WTC11 (cell line): ENCODE measurements at regions of chr2 and their contacts with region 1.

Region 1: GRCh38 chr2:56077352-56077915 is 106.4 kb upstream of the CCDC85A start:
- DNase-seq: peak; percentile 63
- ATAC-seq: peak; percentile 80
- H3K4me3 Mint-ChIP-seq: no peak overlapping the region
- H3K27ac Mint-ChIP-seq: no peak overlapping the region
- H3K4me1 Mint-ChIP-seq: no peaks in the 10 kb centered on the region
- H3K27me3 Mint-ChIP-seq: no peaks in the 10 kb centered on the region; the same call in 1 of the 2 replicates
- CTCF ChIP-seq: peak; percentile 28; the same call in 1 of the 2 replicates

Region 2: DNA sequence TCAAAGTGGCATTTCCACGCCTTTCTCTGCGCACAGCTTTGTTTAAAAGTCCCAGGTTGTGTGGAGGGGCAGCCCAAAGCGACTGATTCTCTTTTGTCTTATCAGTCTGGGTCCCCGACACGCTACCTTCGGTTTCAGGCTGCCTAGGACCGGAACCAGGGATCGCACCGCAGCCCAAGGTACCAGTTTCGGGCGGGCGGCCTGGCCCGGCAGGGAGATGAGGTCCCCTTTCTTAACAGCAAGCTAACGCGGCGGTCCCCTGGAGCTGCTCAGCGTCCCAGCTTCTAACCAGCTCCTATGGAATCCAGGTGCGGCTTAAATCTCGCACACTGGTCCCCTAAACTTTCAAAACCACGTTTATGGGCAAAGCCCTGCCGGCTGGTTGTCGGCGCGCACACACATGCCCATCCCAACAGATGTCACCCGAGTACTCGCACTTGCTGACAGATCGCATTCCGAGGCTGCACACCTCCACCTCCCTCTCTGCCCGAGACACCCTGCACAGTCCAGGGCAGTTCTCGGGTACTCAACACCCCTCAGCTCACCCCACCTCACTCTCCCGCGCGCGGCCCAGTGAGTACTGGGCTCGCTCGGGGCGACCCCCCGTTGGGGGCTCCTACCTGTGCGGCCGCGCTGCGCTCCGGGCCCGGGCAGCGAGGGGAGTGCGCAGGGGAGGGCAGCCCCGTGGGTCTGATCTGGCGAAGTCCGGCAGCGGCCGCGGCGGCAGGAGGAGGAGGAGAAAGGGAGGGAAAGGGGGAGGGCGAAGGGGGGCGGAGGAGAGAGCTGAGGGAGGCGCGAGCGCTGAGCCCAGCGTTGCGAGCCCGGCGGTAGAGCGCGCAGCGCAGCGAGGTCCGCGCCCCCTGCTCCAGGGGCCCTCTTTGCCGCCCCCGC is 154.1 kb before region 1 on chr2 and contains the start of gene EFEMP1:
- CTCF ChIA-PET with region 1: no interaction called
- POLR2A ChIA-PET with region 1: no interaction called
- DNase-seq: peak; percentile 85
- ATAC-seq: peak; percentile 84
- H3K4me3 Mint-ChIP-seq: peak within 1 kb of the TSS; percentile 90
- H3K27ac Mint-ChIP-seq: peak within 1 kb of the TSS; percentile 48; the same call in 1 of the 2 replicates
- H3K4me1 Mint-ChIP-seq: peaks cover 32% of the 10 kb centered on the region
- H3K27me3 Mint-ChIP-seq: peaks cover 39% of the 10 kb centered on the region
- CTCF ChIP-seq: no peak
- total RNA-seq, gene EFEMP1: 24.0 to 25.7 TPM (median 25.6 TPM) in 3 replicates

Region 3: DNA sequence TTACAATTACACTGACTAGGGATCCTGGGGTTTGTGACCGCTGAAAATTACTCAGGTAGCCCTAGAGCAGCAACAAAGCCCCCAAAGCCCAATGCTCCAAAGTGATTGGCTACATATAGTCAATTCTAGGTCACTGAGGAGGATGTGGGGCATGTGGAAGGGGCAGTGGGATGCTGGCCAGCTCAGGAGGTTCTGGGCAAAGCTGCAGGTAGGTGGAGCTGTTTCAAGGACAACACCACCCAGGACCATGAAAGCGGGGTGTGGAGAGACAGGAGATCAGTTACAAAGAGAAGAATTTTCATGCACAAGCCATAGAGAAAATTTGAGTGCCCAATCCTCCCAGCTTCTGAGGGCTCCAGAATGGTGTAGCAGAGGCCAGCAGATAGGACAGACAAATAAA is 31.4 kb after region 1 on chr2:
- CTCF ChIA-PET with region 1: interaction called, 10 read pairs
- POLR2A ChIA-PET with region 1: no interaction called
- DNase-seq: peak; percentile 24
- ATAC-seq: peak; percentile 87
- H3K4me3 Mint-ChIP-seq: no peak overlapping the region
- H3K27ac Mint-ChIP-seq: no peak overlapping the region; the same call in 1 of the 2 replicates
- H3K4me1 Mint-ChIP-seq: peaks cover 19% of the 10 kb centered on the region
- H3K27me3 Mint-ChIP-seq: no peaks in the 10 kb centered on the region
- CTCF ChIP-seq: no peak

Region 4: DNA sequence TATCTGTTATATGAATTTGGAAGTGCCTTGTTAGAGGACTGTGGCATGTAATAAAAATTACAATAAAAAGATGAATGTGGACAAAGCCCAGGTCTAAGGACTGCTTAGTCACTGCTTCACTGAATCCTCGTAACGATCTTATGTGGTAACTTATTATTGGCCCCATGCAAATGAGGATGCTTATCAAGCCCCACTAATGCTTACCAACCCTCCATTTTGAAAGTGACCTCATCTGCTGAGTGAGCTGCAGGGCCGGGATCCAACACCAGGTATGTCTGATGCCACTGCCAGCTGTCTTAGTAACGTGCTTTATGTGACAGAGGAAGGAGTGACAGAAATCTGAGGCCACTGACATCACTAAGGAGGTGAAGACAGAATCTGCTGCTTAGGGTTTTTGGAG is 41.0 kb after region 1 on chr2:
- CTCF ChIA-PET with region 1: interaction called, 12 read pairs
- POLR2A ChIA-PET with region 1: no interaction called
- DNase-seq: no peak
- ATAC-seq: peak; percentile 45
- H3K4me3 Mint-ChIP-seq: peak overlapping the region; percentile 65
- H3K27ac Mint-ChIP-seq: peak overlapping the region; percentile 91
- H3K4me1 Mint-ChIP-seq: peaks cover 57% of the 10 kb centered on the region
- H3K27me3 Mint-ChIP-seq: no peaks in the 10 kb centered on the region
- CTCF ChIP-seq: no peak

Region 5: GRCh38 chr2:56130463-56131070 is 53.1 kb after region 1 on chr2:
- CTCF ChIA-PET with region 1: interaction called, 21 read pairs
- POLR2A ChIA-PET with region 1: interaction called, 3 read pairs
- DNase-seq: peak; percentile 39
- ATAC-seq: peak; percentile 87
- H3K4me3 Mint-ChIP-seq: no peak overlapping the region
- H3K27ac Mint-ChIP-seq: no peak overlapping the region
- H3K4me1 Mint-ChIP-seq: peaks cover 24% of the 10 kb centered on the region
- H3K27me3 Mint-ChIP-seq: no peaks in the 10 kb centered on the region
- CTCF ChIP-seq: peak; percentile 37

Region 6: GRCh38 chr2:56147907-56148306 is 70.5 kb after region 1 on chr2:
- CTCF ChIA-PET with region 1: no interaction called
- POLR2A ChIA-PET with region 1: no interaction called
- DNase-seq: no peak
- ATAC-seq: no peak
- H3K4me3 Mint-ChIP-seq: no peak overlapping the region
- H3K27ac Mint-ChIP-seq: no peak overlapping the region
- H3K4me1 Mint-ChIP-seq: 0 out of 2 replicates have a peak, but pooled peaks cover 3% of the 10 kb centered on the region
- H3K27me3 Mint-ChIP-seq: no peaks in the 10 kb centered on the region
- CTCF ChIP-seq: no peak